HEK293T (cell line): ENCODE measurements at regions of chr14 and their contacts with region 1.

Region 1: GRCh38 chr14:50714450-50715073 is 46.5 kb upstream of the SAV1 start:
- DNase-seq: peak; percentile 44

Region 2: DNA sequence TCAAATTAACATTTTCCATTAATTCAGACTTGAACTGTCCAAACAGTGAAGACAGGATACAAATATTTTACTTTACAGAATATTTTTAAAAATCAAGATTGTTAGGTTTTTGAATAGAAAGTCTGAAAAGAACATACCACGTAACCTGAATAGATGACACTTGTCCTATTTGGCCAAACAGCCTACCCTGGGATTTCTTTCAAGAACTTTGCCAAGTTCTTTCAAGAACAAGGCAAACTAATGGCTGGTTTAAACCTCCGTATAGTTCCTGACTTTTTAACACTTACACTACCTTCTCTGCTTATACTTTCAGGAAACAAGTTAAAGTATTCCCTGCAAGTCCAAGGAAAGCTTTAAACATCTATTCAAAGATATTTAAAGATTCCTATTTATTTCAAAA is 217.2 kb before region 1 on chr14:
- CTCF ChIA-PET with region 1: no interaction called
- POLR2A ChIA-PET with region 1: no interaction called
- DNase-seq: no peak

Region 3: DNA sequence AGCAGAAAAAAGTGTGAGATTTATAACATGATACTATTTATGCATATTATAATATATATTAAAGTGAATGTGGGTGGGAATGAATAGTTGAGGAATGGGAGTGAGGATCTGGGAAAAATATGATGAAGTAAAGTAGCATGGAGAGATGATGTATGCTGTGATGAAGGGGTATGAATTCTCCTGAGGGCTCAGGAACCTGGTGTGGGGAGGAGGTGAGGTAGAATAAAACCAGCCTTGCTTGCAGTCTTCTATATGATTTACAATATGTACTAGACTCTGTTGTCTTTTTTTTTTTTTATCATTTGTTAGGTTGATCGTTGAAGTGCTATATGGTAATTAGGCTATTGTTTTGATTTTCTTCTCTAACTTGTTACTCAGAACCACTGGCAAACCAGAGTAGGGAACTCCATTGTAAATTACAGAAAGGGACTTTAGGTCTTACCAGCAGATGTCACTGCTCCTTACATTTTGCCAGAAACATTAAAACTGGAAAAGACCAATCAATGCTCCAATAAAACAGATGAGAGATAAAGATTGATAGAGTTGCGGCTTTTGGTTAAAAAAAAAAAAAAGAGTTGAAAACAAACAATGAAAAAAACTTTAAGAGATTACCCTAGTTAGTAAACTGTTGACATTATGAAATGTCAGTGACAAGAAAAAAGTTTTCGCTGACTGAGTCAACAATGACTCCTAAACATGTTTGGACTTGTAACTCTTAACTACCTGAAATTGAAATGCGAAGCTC is 114.7 kb before region 1 on chr14:
- CTCF ChIA-PET with region 1: interaction called, 11 read pairs
- POLR2A ChIA-PET with region 1: no interaction called
- DNase-seq: peak; percentile 32

Region 4: DNA sequence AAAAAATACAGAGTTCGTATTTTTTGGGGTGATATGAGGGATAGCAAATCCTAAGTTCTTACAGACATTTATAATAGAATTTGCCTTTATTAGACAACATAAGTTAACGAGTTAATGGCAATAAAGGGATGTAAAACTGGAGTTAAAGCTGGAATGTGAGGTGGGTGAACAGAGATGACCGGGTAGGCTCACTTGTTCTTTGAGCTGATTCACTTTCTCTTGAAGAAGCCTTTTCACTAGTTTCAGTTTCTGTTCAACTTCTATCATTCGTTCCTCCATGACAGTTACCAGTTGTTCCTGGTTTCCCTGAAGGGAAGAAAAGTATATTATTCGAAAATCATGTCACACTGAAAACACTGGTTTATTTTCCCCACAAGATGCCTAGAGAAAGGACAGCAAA is 11.2 kb after region 1 on chr14:
- CTCF ChIA-PET with region 1: interaction called, 14 read pairs
- POLR2A ChIA-PET with region 1: no interaction called
- DNase-seq: no peak